Activated CD8-positive, alpha-beta T cell treated with anti-CD3 and anti-CD28 coated beads for 36 hours (primary cell): ENCODE measurements at regions of chr2 and their contacts with region 1.

Region 1: DNA sequence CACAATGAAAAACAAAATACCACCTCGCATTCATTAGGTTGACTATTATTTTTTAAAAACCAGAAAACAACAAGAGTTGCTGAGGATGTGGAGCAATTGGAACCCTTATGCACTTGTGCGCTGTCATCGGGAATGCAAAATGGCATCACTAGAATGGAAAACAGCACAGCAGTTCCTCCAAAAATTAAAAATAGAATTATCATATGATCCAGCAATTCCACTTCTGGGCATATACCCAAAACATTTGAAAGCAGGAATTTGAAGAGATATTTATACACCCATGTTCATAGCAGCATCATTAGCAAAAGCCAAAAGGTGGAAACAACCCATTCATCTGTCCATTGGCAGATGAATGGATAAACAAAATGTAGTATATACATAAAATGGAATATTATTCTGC is 11.9 kb upstream of the NMUR1 start:
- DNase-seq: no peak
- ATAC-seq: no peak
- H3K4me3 Mint-ChIP-seq: no peak overlapping the region
- H3K27ac Mint-ChIP-seq: no peak overlapping the region
- H3K4me1 Mint-ChIP-seq: peaks cover 20% of the 10 kb centered on the region
- H3K27me3 Mint-ChIP-seq: no peaks in the 10 kb centered on the region
- CTCF ChIP-seq: no peak

Region 2: DNA sequence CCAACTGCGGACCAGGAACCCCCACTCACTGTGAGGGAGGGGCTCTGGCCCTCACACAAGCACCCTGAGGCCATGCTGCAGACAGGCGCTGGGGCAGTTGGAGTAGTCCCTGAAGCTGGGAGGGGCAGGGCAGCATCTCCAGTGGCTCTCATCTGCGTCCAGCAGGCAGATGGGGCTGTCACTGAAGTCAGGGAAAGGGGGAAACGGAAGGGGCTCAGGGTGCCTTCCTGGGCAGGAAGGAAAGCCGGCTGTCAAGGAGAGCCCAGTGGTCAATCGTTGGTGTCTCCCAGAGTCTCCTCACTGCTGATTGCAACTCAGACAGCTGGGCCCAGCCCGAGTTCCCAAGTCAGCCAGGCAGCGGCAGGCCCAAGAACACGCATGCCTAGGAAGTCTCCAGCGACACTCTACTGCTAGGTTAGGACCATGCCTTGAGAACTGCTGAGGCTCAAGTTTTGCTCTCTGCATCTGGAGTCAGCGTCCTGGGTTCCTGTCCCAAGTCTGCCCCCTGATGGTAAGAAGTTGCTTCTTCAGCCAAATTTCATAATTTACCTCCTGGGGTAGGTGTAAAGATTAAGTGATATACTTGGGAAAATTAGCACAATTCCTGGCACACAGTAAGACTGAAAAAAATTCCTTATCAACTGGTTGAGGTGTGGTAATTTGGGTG is 15.6 kb after region 1 on chr2:
- CTCF ChIA-PET with region 1: interaction called, 11 read pairs
- POLR2A ChIA-PET with region 1: interaction called, 4 read pairs
- intact Hi-C with region 1: no loop called
- DNase-seq: peak; percentile 74
- ATAC-seq: peak; percentile 96
- H3K4me3 Mint-ChIP-seq: no peak overlapping the region
- H3K27ac Mint-ChIP-seq: no peak overlapping the region
- H3K4me1 Mint-ChIP-seq: peaks cover 25% of the 10 kb centered on the region
- H3K27me3 Mint-ChIP-seq: no peaks in the 10 kb centered on the region
- CTCF ChIP-seq: peak; percentile 51